Activated naive CD4-positive, alpha-beta T cell treated with anti-CD3 and anti-CD28 coated beads for 36 hours (primary cell): ENCODE measurements at regions of chr15 and their contacts with region 1.

Region 1: DNA sequence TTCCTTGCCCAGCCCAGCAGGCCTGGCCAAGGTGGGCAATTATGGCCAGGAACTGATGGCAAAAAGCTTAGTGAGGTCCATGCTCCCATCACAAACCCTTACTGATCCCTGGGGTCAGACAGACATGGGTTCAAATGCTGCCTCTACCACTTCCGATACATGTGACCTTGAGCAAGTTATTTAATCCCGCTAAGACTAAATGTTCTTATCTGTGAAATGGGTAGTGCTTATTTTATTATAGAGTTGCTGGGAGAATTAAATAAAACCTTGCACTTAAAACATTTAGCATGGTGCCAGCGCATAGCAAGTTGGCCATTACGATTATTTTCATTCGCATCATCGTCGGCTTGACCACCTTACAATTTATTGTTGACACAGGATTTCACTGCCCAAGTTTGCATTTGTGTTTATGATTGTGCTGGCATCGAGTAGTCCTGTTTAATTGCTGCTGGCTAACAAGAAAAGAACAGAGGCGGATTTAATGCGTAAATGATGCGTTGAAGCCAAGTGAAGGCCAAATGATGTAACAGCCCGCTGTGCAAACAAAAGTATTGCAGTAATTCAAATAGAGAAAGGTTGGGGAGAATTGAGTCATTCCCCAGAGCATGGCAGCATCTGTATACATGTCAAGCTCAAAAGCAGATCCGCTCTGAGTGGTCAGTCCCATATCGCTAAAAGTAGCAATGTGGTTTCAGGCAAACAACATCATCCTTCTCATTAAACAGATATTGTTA is 7.3 kb upstream of the FURIN start:
- DNase-seq: peak; percentile 35
- H3K4me3 Mint-ChIP-seq: no peak overlapping the region
- H3K27ac Mint-ChIP-seq: peak overlapping the region; percentile 44
- H3K4me1 Mint-ChIP-seq: peaks cover 50% of the 10 kb centered on the region
- H3K27me3 Mint-ChIP-seq: no peaks in the 10 kb centered on the region

Region 2: GRCh38 chr15:90829942-90830440 is 31.1 kb before region 1 on chr15:
- CTCF ChIA-PET with region 1: interaction called, 6 read pairs
- intact Hi-C with region 1: loop called (anchors 1 kb)
- DNase-seq: peak; percentile 94
- H3K4me3 Mint-ChIP-seq: peak overlapping the region; percentile 62
- H3K27ac Mint-ChIP-seq: peak overlapping the region; percentile 100
- H3K4me1 Mint-ChIP-seq: peaks cover 54% of the 10 kb centered on the region
- H3K27me3 Mint-ChIP-seq: no peaks in the 10 kb centered on the region

Region 3: GRCh38 chr15:90838141-90838540 is 23.0 kb before region 1 on chr15:
- CTCF ChIA-PET with region 1: no interaction called
- intact Hi-C with region 1: loop called (anchors 1 kb)
- DNase-seq: peak; percentile 97
- H3K4me3 Mint-ChIP-seq: peak overlapping the region; percentile 84
- H3K27ac Mint-ChIP-seq: peak overlapping the region; percentile 97
- H3K4me1 Mint-ChIP-seq: peaks cover 66% of the 10 kb centered on the region
- H3K27me3 Mint-ChIP-seq: no peaks in the 10 kb centered on the region

Region 4: DNA sequence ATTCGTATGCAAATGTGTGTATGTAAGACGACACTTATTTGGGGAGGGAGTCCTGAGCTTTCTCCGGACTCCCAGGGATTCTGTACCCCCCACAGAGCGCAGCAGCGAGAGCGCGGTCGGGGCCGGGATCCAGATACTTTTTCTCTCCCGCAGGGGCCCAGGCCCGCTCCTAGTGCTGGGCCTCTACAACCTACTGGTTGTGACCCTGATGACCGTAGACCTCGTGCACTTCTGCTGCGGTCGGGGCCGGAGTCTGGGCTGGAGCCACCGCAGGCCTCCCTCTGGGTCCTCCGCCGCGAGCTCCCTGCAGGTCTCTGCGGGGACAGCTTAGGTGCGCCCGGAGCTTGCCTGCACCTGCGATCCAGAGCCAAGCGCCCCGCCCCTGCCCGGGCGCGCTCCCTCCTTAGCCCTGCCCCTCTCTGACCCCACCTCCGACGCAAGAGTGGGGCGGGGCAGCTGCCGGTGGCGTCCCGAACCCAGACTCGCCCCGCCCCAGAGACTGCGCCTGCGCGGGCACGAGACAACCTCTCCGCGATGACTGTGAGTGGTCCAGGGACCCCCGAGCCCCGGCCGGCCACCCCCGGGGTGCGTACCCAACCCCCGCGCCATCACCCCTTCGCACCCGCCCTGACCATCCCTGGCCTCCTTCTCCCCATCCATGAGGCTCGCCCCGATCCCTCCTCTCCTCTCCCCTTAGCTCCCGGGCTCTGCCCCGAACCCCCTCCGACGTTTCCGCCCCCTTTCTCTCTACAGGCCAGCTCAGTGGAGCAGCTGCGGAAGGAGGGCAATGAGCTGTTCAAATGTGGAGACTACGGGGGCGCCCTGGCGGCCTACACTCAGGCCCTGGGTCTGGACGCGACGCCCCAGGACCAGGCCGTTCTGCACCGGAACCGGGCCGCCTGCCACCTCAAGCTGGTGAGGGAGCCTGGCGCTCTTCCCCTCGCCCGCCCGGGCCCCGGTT is 74.0 kb after region 1 on chr15 and contains the start of gene UNC45A:
- CTCF ChIA-PET with region 1: no interaction called
- intact Hi-C with region 1: no loop called
- DNase-seq: peak; percentile 96
- H3K4me3 Mint-ChIP-seq: peak within 1 kb of the TSS; percentile 83
- H3K27ac Mint-ChIP-seq: peak within 1 kb of the TSS; percentile 82
- H3K4me1 Mint-ChIP-seq: peaks cover 36% of the 10 kb centered on the region
- H3K27me3 Mint-ChIP-seq: no peaks in the 10 kb centered on the region
- total RNA-seq, gene UNC45A: 69.9 to 70.8 TPM